Gastrocnemius medialis (tissue), 4 donors: ENCODE measurements at regions of chr2 and their contacts with region 1.

Region 1: DNA sequence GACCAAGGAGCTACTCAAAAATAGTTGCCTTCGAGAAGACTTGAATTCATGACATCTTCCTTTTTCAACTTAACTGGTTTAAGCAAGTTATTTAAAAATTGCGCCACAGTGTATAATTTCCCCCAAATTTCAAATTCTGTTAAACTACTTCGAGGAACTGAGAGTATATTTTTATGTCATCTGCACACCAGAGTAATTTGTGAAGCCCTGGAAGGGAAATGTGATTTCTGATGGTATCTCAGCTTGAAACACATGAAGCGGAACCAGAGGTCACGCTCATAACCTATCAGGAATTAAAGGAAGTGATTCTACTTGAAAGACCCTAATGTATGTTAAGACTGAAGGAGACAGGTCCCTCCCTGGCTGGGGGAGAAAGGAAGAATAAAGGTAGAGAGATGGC is 33.9 kb upstream of the DARS1 start:
- DNase-seq: no peak
- ATAC-seq: no peak
- H3K4me3 ChIP-seq: peak overlapping the region in 1 of 4 donors; percentile 22
- H3K27ac ChIP-seq: no peak overlapping the region
- H3K4me1 ChIP-seq: peaks cover 18% of the 10 kb centered on the region in 2 donors
- H3K27me3 ChIP-seq: no peaks in the 10 kb centered on the region
- CTCF ChIP-seq: no peak
- POLR2A ChIP-seq: no peak

Region 2: DNA sequence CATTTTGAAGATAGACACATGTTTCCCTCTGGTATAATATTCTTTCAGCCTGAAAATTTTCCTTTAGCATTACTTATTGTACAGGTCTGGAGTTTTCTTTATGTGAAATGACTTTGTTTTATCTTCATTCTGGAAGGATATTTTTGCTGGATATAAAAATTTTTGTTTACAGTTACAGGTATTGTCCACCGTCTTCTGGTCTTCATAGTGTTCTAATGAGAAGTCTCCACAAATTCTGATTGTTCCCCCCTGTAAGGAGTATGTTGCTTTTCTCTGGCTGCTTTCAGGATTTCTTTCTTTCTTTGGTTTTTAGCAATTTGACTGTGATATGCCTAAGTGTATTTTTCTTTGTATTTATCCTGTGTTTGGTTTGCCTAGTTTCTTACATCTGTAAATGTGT is 262.6 kb before region 1 on chr2:
- in situ Hi-C with region 1: no loop called
- intact Hi-C with region 1: no loop called
- DNase-seq: no peak
- ATAC-seq: no peak
- H3K4me3 ChIP-seq: no peak overlapping the region
- H3K27ac ChIP-seq: no peak overlapping the region
- H3K4me1 ChIP-seq: no peaks in the 10 kb centered on the region
- H3K27me3 ChIP-seq: no peaks in the 10 kb centered on the region
- CTCF ChIP-seq: no peak
- POLR2A ChIP-seq: no peak

Region 3: DNA sequence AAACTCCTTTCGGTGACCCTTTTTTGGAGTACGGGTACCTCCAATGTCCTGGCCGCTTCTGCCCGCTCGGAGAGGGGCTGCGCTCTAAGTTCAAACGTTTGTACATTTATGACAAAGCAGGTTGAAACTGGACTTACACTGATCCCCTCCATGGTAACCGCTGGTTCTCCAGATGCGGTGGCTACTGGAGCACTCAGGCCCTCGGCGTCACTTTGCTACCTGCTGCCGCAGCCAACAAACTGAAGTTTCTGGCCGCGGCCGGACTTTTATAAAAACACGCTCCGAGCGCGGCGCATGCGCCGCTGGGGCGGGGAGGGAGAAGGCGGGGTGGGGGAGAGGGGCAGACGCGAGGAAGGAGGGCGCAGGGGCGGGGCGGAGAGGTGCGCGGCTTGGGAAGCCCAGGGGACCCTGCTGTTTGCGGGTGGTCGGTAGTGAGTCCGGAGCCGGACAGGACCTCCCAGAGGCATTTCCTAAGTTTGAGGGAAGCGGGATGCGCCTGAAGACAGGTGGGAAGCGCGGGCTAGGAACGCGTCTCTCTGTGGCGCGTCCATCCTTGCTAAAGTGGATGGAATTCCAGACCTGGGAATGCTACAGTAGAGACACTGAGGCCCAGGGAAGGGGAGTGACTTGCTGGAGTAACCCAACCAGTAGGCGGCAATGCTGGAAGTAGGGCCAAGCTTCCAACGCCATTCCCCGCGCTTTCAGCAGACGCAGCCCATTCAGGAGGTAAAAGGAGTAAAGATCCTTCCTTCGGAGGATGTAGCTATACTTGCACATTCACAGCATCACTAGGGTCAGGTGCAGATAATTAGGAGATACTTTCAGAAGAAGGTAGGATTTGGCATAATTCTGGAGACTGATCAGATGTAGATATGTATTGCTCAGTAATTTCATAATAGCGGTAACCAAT is 98.9 kb after region 1 on chr2 and contains the start of gene CXCR4:
- in situ Hi-C with region 1: no loop called
- intact Hi-C with region 1: loop called (anchors 10 kb)
- DNase-seq: peak in 1 of 2 donors; percentile 28
- ATAC-seq: peak; percentile 16 to 20
- H3K4me3 ChIP-seq: peak within 1 kb of the TSS; percentile 48 to 67 (median 56)
- H3K27ac ChIP-seq: peak within 1 kb of the TSS in 1 of 4 donors; percentile 57
- H3K4me1 ChIP-seq: peaks cover 4 to 34% of the 10 kb centered on the region in 2 donors
- H3K27me3 ChIP-seq: peaks cover 40 to 91% (median 54%) of the 10 kb centered on the region in 3 donors
- CTCF ChIP-seq: no peak
- POLR2A ChIP-seq: peak; percentile 26 to 51
- total RNA-seq, gene CXCR4: 2.5 to 6.6 (median 4.0) TPM

Region 4: GRCh38 chr2:136238286-136239078 is 219.2 kb after region 1 on chr2:
- in situ Hi-C with region 1: no loop called
- intact Hi-C with region 1: loop called (anchors 10 kb)
- DNase-seq: no peak
- ATAC-seq: peak; percentile 80 to 83
- H3K4me3 ChIP-seq: no peak overlapping the region
- H3K27ac ChIP-seq: peak overlapping the region; percentile 58 to 68 (median 64)
- H3K4me1 ChIP-seq: peaks cover 0 to 10% of the 10 kb centered on the region in 2 donors
- H3K27me3 ChIP-seq: no peaks in the 10 kb centered on the region
- CTCF ChIP-seq: no peak
- POLR2A ChIP-seq: no peak